ENCODE measurements at regions of chr12 and their contacts with region 1.

Region 1: DNA sequence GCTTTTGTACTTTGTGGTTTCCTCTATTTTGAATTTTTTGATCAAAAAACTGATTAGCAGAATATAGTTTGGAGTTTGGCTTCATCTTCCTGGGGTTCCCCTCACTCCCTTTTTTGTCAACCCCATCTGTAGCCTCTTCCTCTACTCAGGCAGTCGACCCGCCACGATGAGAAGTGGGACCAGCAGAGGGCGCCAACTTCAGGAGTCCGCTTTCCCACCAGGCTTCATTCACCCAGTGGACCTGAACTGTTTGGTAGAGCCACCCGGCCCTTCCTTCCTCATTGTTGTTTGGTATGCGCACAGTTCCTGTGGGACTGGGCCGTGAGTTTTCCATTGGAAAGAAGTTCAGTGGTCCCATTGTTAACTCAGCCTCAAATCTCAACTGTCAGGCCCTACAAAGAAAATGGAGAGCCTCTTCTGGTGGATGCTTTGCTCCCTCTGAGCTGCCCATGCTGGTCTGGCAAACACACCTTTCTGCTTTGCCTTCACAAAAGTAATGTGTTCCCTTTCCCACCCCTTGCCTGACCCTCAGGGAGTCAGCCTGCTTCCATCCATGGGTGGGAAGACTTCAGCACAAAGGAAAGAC is 21.7 kb downstream of the TMBIM6 start:
- DNase-seq: peak; percentile 64 to 81 (median 73)
- H3K4me3 ChIP-seq: no peak overlapping the region
- H3K4me3 Mint-ChIP-seq: peak overlapping the region in 6 of 7 donors; percentile 45 to 58 (median 50)
- H3K27ac ChIP-seq: no peak overlapping the region
- H3K27ac Mint-ChIP-seq: peak overlapping the region; percentile 78 to 93 (median 89)
- H3K4me1 ChIP-seq: peaks cover 37% of the 10 kb centered on the region
- H3K4me1 Mint-ChIP-seq: peaks cover 47 to 59% (median 57%) of the 10 kb centered on the region in 3 donors
- H3K27me3 ChIP-seq: no peaks in the 10 kb centered on the region
- H3K27me3 Mint-ChIP-seq: no peaks in the 10 kb centered on the region

Region 2: DNA sequence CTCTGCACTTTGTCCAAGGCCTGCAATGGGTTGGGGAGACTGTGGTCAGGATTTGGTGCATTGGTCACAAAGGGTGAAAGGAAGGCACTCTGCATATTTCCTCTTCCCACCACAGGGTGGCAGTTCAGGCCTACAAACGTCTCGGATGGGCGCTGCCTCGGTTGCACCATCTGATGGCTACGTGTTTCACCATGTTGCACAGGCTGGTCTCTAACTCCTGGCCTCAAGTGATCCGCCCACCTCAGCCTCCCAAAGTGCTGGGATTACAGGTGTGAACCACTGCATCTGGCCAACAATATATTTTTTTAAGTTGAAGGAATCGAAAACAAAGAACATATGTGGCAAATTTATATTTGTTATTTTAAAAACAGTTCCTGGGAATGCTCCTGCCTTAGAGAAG is 13.3 kb after region 1 on chr12:
- CTCF ChIA-PET with region 1: interaction called, 16 read pairs
- POLR2A ChIA-PET with region 1: no interaction called
- DNase-seq: peak in 4 of 5 donors; percentile 8 to 66 (median 38)
- H3K4me3 ChIP-seq: no peak overlapping the region
- H3K4me3 Mint-ChIP-seq: no peak overlapping the region
- H3K27ac ChIP-seq: no peak overlapping the region
- H3K27ac Mint-ChIP-seq: no peak overlapping the region
- H3K4me1 ChIP-seq: peaks cover 15% of the 10 kb centered on the region
- H3K4me1 Mint-ChIP-seq: peaks cover 12 to 19% (median 13%) of the 10 kb centered on the region in 3 donors
- H3K27me3 ChIP-seq: peaks cover 4% of the 10 kb centered on the region
- H3K27me3 Mint-ChIP-seq: peaks cover 24 to 27% of the 10 kb centered on the region in 2 donors

Measured in CD8-positive, alpha-beta memory T cell (primary cell).